ENCODE measurements at regions of chr12 and their contacts with region 1.

Region 1: DNA sequence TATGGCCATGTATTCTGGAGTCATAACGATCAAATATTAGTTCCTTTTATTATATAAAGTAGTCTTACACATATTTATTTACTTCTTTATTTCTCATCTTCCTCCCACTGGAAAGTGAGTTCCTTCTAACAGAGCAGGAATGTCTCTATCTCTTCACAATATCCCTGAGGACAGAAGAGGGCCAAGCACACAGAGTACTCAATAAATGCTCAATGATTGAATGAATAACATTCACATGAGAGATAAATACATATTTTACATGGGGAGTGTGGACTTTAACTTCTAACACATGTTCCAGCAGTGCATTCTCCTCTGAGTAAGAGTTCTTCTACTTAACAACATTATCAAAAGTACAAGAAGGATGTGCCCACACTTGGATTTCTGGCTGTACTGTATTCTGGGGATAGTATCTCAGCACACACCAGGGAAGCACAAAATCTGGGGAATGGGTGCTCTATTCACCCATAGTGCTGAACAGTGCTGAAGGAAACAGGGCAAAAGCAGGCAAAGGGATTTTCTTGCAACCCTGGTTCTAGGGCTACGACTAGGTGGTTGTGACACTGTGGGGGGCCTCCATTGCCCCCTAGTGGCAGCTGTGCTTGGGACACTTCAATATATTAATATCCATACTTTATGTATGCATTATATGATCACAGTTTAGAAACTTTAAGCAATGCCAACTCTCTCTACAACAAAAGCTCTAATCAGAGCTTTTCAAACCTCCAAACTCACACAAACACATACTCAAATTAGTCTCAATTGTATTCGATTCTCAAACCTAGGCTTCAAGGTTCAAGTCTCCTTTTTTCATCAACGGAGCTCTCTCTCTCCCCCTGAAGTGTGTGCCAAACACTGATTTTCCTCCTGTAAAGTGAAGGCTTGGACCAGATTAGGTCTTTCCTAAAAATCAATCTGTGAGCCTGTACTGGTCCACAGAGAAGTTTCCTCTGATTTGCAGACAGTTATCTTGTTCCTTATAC is 115.5 kb downstream of the SLC2A13 start:
- H3K4me3 ChIP-seq: no peak overlapping the region
- H3K27ac ChIP-seq: no peak overlapping the region
- H3K4me1 ChIP-seq: no peaks in the 10 kb centered on the region
- CTCF ChIP-seq: peak; percentile 44

Region 2: GRCh38 chr12:39764944-39765560 is 225.4 kb before region 1 on chr12:
- CTCF ChIA-PET with region 1: interaction called, 19 read pairs
- POLR2A ChIA-PET with region 1: no interaction called
- H3K4me3 ChIP-seq: no peak overlapping the region
- H3K27ac ChIP-seq: no peak overlapping the region
- H3K4me1 ChIP-seq: no peaks in the 10 kb centered on the region
- CTCF ChIP-seq: no peak

Region 3: GRCh38 chr12:39866135-39866534 is 124.3 kb before region 1 on chr12:
- CTCF ChIA-PET with region 1: no interaction called
- POLR2A ChIA-PET with region 1: no interaction called
- H3K4me3 ChIP-seq: no peak overlapping the region
- H3K27ac ChIP-seq: no peak overlapping the region
- H3K4me1 ChIP-seq: no peaks in the 10 kb centered on the region
- CTCF ChIP-seq: no peak

Region 4: DNA sequence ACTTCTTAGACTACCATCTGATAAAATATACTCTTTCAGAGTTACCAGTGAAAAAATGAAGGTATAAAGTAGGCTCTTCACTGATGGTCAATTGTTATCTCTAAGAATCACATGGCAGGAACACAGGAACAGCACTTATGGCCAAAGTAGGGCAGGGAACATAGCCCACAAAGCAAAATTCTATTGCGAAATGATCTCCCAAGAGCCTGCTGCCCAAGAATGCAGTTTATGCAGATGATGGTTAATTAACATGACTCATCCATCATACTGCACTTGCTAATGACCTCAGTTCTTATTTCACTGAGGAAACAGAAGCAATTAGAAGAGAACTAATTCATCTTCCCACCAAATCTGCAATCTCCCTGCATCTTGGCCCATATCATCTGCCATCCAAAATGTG is 18.3 kb before region 1 on chr12:
- CTCF ChIA-PET with region 1: interaction called, 13 read pairs
- POLR2A ChIA-PET with region 1: no interaction called
- H3K4me3 ChIP-seq: no peak overlapping the region
- H3K27ac ChIP-seq: no peak overlapping the region
- H3K4me1 ChIP-seq: peaks cover 2% of the 10 kb centered on the region; the same call in 1 of the 2 replicates
- CTCF ChIP-seq: no peak

Region 5: DNA sequence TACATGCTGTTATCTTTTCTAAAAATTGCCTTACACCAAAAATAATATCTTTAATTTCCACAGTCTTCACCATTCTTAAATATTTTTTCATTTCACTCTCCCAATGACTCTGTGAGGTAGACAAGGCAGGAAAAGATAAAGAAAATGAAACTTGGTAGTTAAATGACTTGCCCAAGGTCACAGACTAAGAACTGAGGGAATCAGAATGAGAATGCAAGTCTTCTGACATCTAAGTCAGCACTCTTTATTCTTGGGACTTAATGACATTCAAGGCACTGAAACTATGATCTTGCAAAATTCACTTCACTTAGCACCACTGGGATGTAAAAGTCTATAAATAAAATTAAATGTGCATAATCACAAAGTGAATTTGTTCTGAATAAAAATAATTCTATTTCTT is 11.0 kb after region 1 on chr12:
- CTCF ChIA-PET with region 1: interaction called, 10 read pairs
- POLR2A ChIA-PET with region 1: no interaction called
- H3K4me3 ChIP-seq: no peak overlapping the region
- H3K27ac ChIP-seq: no peak overlapping the region
- H3K4me1 ChIP-seq: no peaks in the 10 kb centered on the region
- CTCF ChIP-seq: no peak

Region 6: GRCh38 chr12:40010899-40011774 is 20.7 kb after region 1 on chr12:
- CTCF ChIA-PET with region 1: interaction called, 22 read pairs
- POLR2A ChIA-PET with region 1: no interaction called
- H3K4me3 ChIP-seq: no peak overlapping the region
- H3K27ac ChIP-seq: no peak overlapping the region
- H3K4me1 ChIP-seq: no peaks in the 10 kb centered on the region
- CTCF ChIP-seq: peak; percentile 22; the same call in 1 of the 2 replicates

Region 7: DNA sequence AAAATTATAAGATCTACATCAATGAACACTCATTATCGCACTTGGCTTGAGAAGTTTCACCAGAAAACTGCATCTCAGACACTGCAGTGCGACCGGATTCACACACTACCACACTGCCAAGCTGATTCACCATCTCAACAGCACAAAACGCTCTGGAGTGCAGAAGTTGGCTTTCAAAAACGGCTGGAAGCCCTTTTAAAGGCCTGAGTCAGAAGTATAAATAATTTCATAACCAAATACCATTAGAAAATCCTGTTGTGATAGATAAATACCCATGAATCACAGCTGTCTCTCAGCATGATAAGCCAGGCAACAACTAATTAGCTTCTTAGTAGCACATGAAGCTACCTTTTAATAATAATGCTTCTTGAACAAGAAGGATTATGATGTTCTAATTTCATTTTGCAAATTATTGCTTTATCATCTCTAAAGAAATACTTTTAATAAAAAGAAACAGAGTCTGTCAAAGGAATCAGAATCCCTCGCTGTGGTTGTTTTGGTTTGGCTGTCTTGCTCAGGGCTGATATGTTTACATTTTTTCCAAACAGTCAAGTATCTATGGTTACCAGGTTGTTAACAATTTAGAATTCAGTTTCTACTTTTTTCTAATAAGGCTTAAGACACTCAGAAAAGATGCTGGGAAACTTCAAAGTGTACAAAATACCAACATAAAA is 64.3 kb after region 1 on chr12:
- CTCF ChIA-PET with region 1: no interaction called
- POLR2A ChIA-PET with region 1: no interaction called
- H3K4me3 ChIP-seq: no peak overlapping the region
- H3K27ac ChIP-seq: no peak overlapping the region
- H3K4me1 ChIP-seq: peaks cover 32% of the 10 kb centered on the region
- CTCF ChIP-seq: no peak